A673 (cell line): ENCODE measurements at regions of chr6 and their contacts with region 1.

Region 1: DNA sequence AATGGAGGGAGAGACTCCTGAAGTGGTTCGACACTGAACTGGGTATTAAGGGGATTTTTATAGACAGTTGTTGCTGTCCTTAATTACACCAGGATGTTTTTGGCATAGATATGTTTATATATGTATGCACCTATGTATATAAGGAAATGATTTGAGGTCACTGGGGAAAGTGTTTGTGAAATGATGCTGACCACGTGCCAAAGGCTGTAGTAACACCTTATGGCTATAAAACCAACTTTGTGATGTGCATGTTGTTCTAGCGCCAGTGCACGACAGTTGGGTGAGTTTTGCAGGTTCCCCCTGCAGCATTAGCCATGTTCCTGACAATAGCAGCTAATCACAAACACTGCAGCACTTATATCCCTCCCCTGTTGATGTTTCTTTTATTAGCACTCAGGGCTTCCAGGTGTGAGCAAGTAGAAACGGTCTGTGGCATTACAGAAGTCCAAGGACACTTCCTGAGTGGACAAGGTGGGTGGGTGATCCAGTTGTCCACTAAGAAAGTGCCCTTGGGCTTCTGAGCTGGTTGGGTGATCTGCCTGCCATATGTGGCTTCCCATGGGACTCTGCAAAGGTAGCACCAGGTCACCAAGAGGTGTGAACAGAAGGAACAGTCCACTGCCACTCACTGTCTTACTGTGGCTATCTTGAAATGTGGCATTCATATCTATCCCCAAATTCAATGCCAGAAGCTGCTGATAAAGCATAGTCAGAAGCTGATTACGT is 63.0 kb upstream of the RBM24 start:
- DNase-seq: no peak
- H3K4me3 ChIP-seq: no peak overlapping the region
- H3K27ac ChIP-seq: no peak overlapping the region
- H3K4me1 ChIP-seq: no peaks in the 10 kb centered on the region
- H3K27me3 ChIP-seq: no peaks in the 10 kb centered on the region
- CTCF ChIP-seq: no peak

Region 2: DNA sequence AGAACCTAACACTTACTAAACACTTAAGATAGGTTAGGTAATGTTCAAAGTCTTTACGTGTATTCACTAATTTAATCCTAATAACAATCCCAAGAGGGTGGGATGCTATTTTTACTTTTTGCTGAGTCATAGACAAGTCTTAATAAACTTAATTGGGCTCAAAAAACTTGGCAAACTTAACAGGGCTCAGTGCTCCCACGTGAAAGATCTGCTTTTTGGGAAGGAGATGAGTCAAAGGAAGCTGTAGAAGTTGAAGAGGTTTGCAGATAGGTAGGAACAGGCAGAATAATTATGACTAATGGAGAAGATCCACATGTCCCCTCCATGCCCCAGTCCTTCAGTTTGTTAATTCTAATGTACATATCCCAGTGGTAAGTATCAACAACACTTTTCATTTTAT is 160.9 kb before region 1 on chr6:
- CTCF ChIA-PET with region 1: no interaction called
- POLR2A ChIA-PET with region 1: no interaction called
- intact Hi-C with region 1: no loop called
- DNase-seq: peak; percentile 38
- H3K4me3 ChIP-seq: no peak overlapping the region
- H3K27ac ChIP-seq: no peak overlapping the region
- H3K4me1 ChIP-seq: peaks cover 4% of the 10 kb centered on the region
- H3K27me3 ChIP-seq: no peaks in the 10 kb centered on the region
- CTCF ChIP-seq: no peak

Region 3: DNA sequence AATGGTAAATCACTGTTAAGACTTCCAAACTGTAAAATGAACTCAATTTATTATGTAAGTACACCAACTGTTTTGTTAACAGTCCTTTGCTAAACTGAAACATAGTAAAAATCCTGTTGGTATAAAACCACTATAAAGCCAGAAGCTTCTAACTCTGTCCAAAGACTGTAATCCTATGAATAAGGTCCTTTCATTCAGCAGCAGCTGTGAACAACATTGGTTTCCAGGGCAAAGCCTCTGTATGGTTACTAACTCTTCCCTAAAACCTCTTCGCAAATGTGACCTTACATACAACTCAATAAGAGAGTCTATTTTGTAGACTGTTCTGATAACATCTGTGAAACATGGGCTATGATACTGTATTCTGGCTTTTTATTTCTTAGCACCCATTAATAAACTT is 448.5 kb after region 1 on chr6:
- CTCF ChIA-PET with region 1: interaction called, 16 read pairs
- POLR2A ChIA-PET with region 1: no interaction called
- intact Hi-C with region 1: no loop called
- DNase-seq: no peak
- H3K4me3 ChIP-seq: no peak overlapping the region
- H3K27ac ChIP-seq: no peak overlapping the region
- H3K4me1 ChIP-seq: no peaks in the 10 kb centered on the region
- H3K27me3 ChIP-seq: no peaks in the 10 kb centered on the region
- CTCF ChIP-seq: no peak